ENCODE measurements at regions of chr22 and their contacts with region 1.

Region 1: GRCh38 chr22:44259366-44260215 is 53.2 kb downstream of the SHISAL1 start:
- DNase-seq: no peak
- ATAC-seq: no peak
- H3K4me3 ChIP-seq: no peak overlapping the region
- H3K27ac ChIP-seq: no peak overlapping the region
- H3K4me1 ChIP-seq: no peaks in the 10 kb centered on the region
- H3K27me3 ChIP-seq: no peaks in the 10 kb centered on the region

Region 2: GRCh38 chr22:44192098-44192810 is 67.3 kb before region 1 on chr22:
- intact Hi-C with region 1: loop called in 1 of 2 experiments (anchors 10 kb)
- DNase-seq: peak in 1 of 2 donors; percentile 59
- ATAC-seq: peak; percentile 11
- H3K4me3 ChIP-seq: no peak overlapping the region
- H3K27ac ChIP-seq: no peak overlapping the region
- H3K4me1 ChIP-seq: no peaks in the 10 kb centered on the region
- H3K27me3 ChIP-seq: no peaks in the 10 kb centered on the region